ENCODE measurements at regions of chr2 and their contacts with region 1.

Region 1: GRCh38 chr2:12501469-12502158 is 215.1 kb upstream of the TRIB2 start:
- DNase-seq: peak; percentile 27 to 78 (median 44)
- ATAC-seq: peak; percentile 96 to 98 (median 96)
- H3K4me3 ChIP-seq: no peak overlapping the region
- H3K4me3 Mint-ChIP-seq: peak overlapping the region; percentile 49 to 65 (median 61)
- H3K27ac ChIP-seq: peak overlapping the region; percentile 88
- H3K27ac Mint-ChIP-seq: peak overlapping the region; percentile 94 to 97
- H3K4me1 ChIP-seq: peaks cover 77 to 90% of the 10 kb centered on the region in 2 experiments
- H3K4me1 Mint-ChIP-seq: peaks cover 98 to 100% (median 98%) of the 10 kb centered on the region in 3 donors
- H3K27me3 ChIP-seq: no peaks in the 10 kb centered on the region
- H3K27me3 Mint-ChIP-seq: no peaks in the 10 kb centered on the region

Region 2: GRCh38 chr2:12412898-12413305 is 88.7 kb before region 1 on chr2:
- CTCF ChIA-PET with region 1: no interaction called
- POLR2A ChIA-PET with region 1: no interaction called
- DNase-seq: peak in 21 of 35 experiments; percentile 1 to 50 (median 10)
- ATAC-seq: peak; percentile 43 to 89 (median 62)
- H3K4me3 ChIP-seq: no peak overlapping the region
- H3K4me3 Mint-ChIP-seq: no peak overlapping the region
- H3K27ac ChIP-seq: no peak overlapping the region
- H3K27ac Mint-ChIP-seq: peak overlapping the region; percentile 74 to 83
- H3K4me1 ChIP-seq: peaks cover 17 to 20% of the 10 kb centered on the region in 2 experiments
- H3K4me1 Mint-ChIP-seq: peaks cover 30 to 40% (median 34%) of the 10 kb centered on the region in 3 donors
- H3K27me3 ChIP-seq: no peaks in the 10 kb centered on the region
- H3K27me3 Mint-ChIP-seq: no peaks in the 10 kb centered on the region

Region 3: DNA sequence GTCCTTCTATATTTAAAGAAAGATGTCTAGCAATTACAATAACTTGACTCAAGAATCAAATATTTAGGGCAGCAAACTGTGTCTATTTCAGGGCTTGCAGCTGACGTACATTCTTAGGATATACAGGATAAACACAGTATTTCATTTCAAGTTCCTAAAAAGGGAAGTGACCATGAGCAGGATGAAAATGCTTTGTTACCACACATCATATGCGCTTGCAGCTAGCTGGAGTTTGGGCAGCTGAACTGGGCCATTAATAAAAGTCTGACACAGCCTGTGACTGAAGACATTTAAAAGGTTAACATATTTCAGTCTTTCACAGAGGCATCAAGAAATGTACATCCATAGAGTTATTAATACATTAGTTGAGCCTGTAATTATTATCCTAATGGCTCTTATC is 49.4 kb before region 1 on chr2:
- CTCF ChIA-PET with region 1: no interaction called
- POLR2A ChIA-PET with region 1: no interaction called
- DNase-seq: no peak
- ATAC-seq: no peak
- H3K4me3 ChIP-seq: peak overlapping the region in 1 of 2 donors; percentile 3
- H3K4me3 Mint-ChIP-seq: peak overlapping the region; percentile 48 to 62 (median 54)
- H3K27ac ChIP-seq: peak overlapping the region; percentile 64
- H3K27ac Mint-ChIP-seq: peak overlapping the region; percentile 91 to 93
- H3K4me1 ChIP-seq: peaks cover 15 to 16% of the 10 kb centered on the region in 2 experiments
- H3K4me1 Mint-ChIP-seq: peaks cover 38 to 51% (median 48%) of the 10 kb centered on the region in 3 donors
- H3K27me3 ChIP-seq: no peaks in the 10 kb centered on the region
- H3K27me3 Mint-ChIP-seq: no peaks in the 10 kb centered on the region

Region 4: GRCh38 chr2:12486205-12487118 is 15.2 kb before region 1 on chr2:
- CTCF ChIA-PET with region 1: interaction called in 1 of 2 experiments, 6 read pairs
- POLR2A ChIA-PET with region 1: interaction called, 9 to 16 read pairs
- DNase-seq: no peak
- ATAC-seq: no peak
- H3K4me3 ChIP-seq: no peak overlapping the region
- H3K4me3 Mint-ChIP-seq: peak overlapping the region in 1 of 3 donors; percentile 78
- H3K27ac ChIP-seq: peak overlapping the region; percentile 55
- H3K27ac Mint-ChIP-seq: peak overlapping the region; percentile 96 to 97
- H3K4me1 ChIP-seq: peaks cover 32 to 46% of the 10 kb centered on the region in 2 experiments
- H3K4me1 Mint-ChIP-seq: peaks cover 64 to 69% (median 66%) of the 10 kb centered on the region in 3 donors
- H3K27me3 ChIP-seq: no peaks in the 10 kb centered on the region
- H3K27me3 Mint-ChIP-seq: no peaks in the 10 kb centered on the region

Region 5: GRCh38 chr2:12728221-12728777 is 226.7 kb after region 1 on chr2:
- CTCF ChIA-PET with region 1: no interaction called
- POLR2A ChIA-PET with region 1: interaction called in 1 of 2 experiments, 10 read pairs
- DNase-seq: peak; percentile 36 to 86 (median 66)
- ATAC-seq: peak; percentile 80 to 90 (median 84)
- H3K4me3 ChIP-seq: peak overlapping the region; percentile 13 to 45
- H3K4me3 Mint-ChIP-seq: peak overlapping the region; percentile 49 to 75 (median 59)
- H3K27ac ChIP-seq: peak overlapping the region; percentile 47
- H3K27ac Mint-ChIP-seq: peak overlapping the region; percentile 88 to 94
- H3K4me1 ChIP-seq: peaks cover 37 to 79% of the 10 kb centered on the region in 2 experiments
- H3K4me1 Mint-ChIP-seq: peaks cover 91 to 98% (median 97%) of the 10 kb centered on the region in 3 donors
- H3K27me3 ChIP-seq: no peaks in the 10 kb centered on the region
- H3K27me3 Mint-ChIP-seq: no peaks in the 10 kb centered on the region

Region 6: DNA sequence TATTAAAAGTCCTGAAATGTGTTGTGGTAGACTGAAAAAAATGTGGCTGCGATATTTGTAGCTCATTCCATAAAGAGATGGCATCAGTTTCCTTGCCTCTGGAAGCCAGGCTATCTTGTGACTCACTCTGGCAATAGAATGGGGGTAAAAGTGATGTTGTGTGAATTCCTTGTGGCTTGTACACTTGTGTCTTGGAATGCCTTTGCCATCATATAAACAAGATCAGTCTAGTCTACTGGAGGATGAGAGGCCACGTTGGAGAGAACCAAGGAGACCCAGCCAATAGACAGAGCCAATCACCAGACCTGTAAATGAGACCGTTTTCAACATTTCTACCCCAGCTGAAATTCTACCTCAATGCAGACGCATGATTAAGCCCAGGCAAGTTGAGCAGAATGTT is 469.2 kb after region 1 on chr2:
- CTCF ChIA-PET with region 1: no interaction called
- POLR2A ChIA-PET with region 1: no interaction called
- DNase-seq: no peak
- ATAC-seq: no peak
- H3K4me3 ChIP-seq: no peak overlapping the region
- H3K4me3 Mint-ChIP-seq: no peak overlapping the region
- H3K27ac ChIP-seq: no peak overlapping the region
- H3K27ac Mint-ChIP-seq: no peak overlapping the region
- H3K4me1 ChIP-seq: peaks cover 0 to 3% of the 10 kb centered on the region in 2 experiments
- H3K4me1 Mint-ChIP-seq: peaks cover 4 to 17% (median 9%) of the 10 kb centered on the region in 3 donors
- H3K27me3 ChIP-seq: peaks cover 0 to 7% of the 10 kb centered on the region in 2 experiments
- H3K27me3 Mint-ChIP-seq: peaks cover 5 to 13% of the 10 kb centered on the region in 2 donors